Activated CD8-positive, alpha-beta T cell treated with anti-CD3 and anti-CD28 coated beads for 36 hours (primary cell): ENCODE measurements at regions of chr14 and their contacts with region 1.

Region 1: GRCh38 chr14:77023001-77023996 is 5.2 kb downstream of the IRF2BPL start:
- DNase-seq: peak; percentile 77
- ATAC-seq: peak; percentile 12
- H3K4me3 Mint-ChIP-seq: peak overlapping the region; percentile 13
- H3K27ac Mint-ChIP-seq: peak overlapping the region; percentile 44
- H3K4me1 Mint-ChIP-seq: peaks cover 46% of the 10 kb centered on the region
- H3K27me3 Mint-ChIP-seq: no peaks in the 10 kb centered on the region
- CTCF ChIP-seq: no peak

Region 2: GRCh38 chr14:76947078-76947837 is 76.0 kb before region 1 on chr14:
- CTCF ChIA-PET with region 1: interaction called, 10 read pairs
- POLR2A ChIA-PET with region 1: interaction called, 4 read pairs
- intact Hi-C with region 1: no loop called
- DNase-seq: peak; percentile 92
- ATAC-seq: peak; percentile 92
- H3K4me3 Mint-ChIP-seq: no peak overlapping the region
- H3K27ac Mint-ChIP-seq: peak overlapping the region; percentile 79
- H3K4me1 Mint-ChIP-seq: peaks cover 41% of the 10 kb centered on the region
- H3K27me3 Mint-ChIP-seq: no peaks in the 10 kb centered on the region
- CTCF ChIP-seq: peak; percentile 45

Region 3: GRCh38 chr14:76956316-76957090 is 66.8 kb before region 1 on chr14:
- CTCF ChIA-PET with region 1: interaction called, 11 read pairs
- POLR2A ChIA-PET with region 1: interaction called, 27 read pairs
- intact Hi-C with region 1: loop called (anchors 5 kb)
- DNase-seq: peak; percentile 96
- ATAC-seq: peak; percentile 64
- H3K4me3 Mint-ChIP-seq: peak overlapping the region; percentile 79
- H3K27ac Mint-ChIP-seq: peak overlapping the region; percentile 94
- H3K4me1 Mint-ChIP-seq: peaks cover 68% of the 10 kb centered on the region
- H3K27me3 Mint-ChIP-seq: no peaks in the 10 kb centered on the region
- CTCF ChIP-seq: no peak

Region 4: GRCh38 chr14:76962303-76962660 is 61.0 kb before region 1 on chr14:
- CTCF ChIA-PET with region 1: interaction called, 11 read pairs
- POLR2A ChIA-PET with region 1: interaction called, 27 read pairs
- intact Hi-C with region 1: loop called (anchors 5 kb)
- DNase-seq: peak; percentile 14
- ATAC-seq: peak; percentile 4
- H3K4me3 Mint-ChIP-seq: peak overlapping the region; percentile 75
- H3K27ac Mint-ChIP-seq: peak overlapping the region; percentile 100
- H3K4me1 Mint-ChIP-seq: peaks cover 88% of the 10 kb centered on the region
- H3K27me3 Mint-ChIP-seq: peaks cover 2% of the 10 kb centered on the region
- CTCF ChIP-seq: no peak

Region 5: GRCh38 chr14:77053046-77053841 is 29.9 kb after region 1 on chr14:
- CTCF ChIA-PET with region 1: interaction called, 21 read pairs
- POLR2A ChIA-PET with region 1: interaction called, 3 read pairs
- intact Hi-C with region 1: no loop called
- DNase-seq: peak; percentile 90
- ATAC-seq: peak; percentile 93
- H3K4me3 Mint-ChIP-seq: no peak overlapping the region
- H3K27ac Mint-ChIP-seq: peak overlapping the region; percentile 75
- H3K4me1 Mint-ChIP-seq: peaks cover 17% of the 10 kb centered on the region
- H3K27me3 Mint-ChIP-seq: no peaks in the 10 kb centered on the region
- CTCF ChIP-seq: peak; percentile 100